ENCODE measurements at regions of chr5 and their contacts with region 1.

Region 1: DNA sequence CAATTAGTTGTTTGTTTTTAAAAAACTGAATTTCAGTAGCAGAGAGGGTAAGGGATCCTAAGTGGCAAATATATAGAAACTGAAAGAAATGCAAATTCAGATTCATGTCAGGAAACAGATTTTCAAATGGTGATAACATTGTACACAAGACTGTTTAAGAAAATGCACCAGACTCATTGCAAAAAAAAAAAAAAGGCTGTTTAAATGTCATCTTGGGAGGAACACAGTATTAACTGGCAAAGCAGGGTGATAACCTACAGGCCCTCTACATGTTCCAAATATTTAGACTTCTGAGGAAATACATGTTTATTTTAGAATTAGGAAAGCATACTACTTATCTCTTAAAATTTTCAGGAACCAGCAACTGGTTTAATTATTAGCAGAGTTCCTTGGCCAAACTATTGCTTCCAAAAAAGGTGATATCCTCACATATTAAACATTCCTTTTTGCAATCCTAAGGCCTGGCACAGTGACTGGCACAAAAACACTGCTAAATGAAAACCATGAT is 114.5 kb downstream of the TSSK1B start:
- DNase-seq: no peak

Region 2: DNA sequence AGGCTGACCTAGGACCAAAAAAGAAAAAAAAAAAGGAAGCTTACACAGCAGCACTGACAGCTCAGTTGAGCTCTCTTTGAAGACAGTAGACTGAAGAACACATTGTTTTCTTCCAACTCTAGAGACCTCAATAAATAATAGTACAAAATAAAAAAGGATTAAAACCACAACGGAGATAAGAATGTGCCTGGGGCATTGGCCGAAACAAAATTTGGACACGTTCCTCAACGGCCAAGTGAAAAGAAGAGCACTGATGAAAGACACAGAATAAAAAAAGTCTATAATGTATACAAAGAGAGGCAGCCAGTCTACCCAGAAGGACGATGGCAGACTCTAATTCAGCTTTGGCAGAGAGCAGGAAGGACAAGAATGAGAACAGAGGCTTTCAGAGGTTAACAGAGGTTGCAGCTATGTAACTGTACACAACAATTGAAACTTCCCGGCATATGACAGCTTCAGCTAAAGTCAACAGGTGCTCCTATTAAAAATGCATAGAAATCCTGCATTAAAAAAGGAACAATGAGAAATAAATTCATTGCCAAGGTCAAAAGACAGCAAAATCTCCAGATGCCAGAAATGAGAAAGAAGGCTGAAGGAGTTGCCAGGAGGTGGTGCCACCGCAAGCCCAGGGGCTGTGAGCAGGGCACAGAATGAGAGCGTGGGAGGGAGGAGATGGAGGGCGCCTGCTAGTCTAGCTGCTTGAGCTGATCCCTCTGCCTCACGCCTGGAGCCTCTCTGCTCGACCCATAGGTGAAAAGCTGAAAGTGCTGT is 229.8 kb before region 1 on chr5:
- intact Hi-C with region 1: loop called (anchors 5 kb)
- DNase-seq: no peak

Region 3: GRCh38 chr5:113274836-113275414 is 45.4 kb before region 1 on chr5:
- intact Hi-C with region 1: no loop called
- DNase-seq: no peak

Region 4: DNA sequence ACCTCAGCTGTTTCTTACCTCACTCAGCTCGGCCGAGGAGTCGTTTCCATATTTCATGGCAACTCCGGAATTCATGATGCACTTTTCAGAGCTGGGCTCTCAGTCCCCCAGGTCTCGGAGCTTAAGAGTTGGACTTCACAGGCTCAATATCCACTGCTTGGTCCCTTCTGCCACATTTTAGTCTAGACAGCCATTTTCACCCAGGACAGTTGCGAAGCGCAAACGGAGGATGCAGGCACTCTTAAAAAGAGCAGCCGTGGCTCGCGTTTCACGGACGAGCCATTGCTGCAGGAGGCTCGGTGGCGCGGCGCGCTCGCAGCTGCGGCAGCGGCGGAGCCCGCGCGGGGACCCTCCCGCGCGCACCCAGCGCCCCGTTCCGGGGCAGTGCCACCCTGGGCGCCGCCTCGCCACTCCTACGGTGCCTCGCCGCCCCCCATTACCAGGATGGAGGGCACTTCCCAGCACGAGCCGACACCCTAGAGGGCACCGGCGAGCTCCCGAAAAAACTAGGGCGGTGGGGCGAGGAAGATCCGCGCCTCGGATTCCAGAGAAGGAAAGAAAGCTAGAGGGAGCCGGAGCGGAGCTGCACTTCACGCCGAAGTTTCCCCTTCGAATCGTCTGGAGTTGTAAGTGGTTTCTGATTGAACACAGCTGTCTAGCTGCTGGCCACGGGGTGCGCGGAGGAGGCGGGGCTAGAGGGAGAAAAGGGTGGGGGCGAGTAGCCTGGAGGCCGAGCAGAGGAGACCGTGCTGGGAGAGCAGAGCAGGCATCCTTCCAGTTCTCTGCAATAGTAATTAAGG is 25.8 kb before region 1 on chr5:
- intact Hi-C with region 1: no loop called
- DNase-seq: peak; percentile 95

Region 5: GRCh38 chr5:113397046-113397445 is 76.7 kb after region 1 on chr5:
- intact Hi-C with region 1: no loop called
- DNase-seq: no peak